ENCODE measurements at regions of chr3 and their contacts with region 1.

Region 1: GRCh38 chr3:14967285-14967684 is 19.9 kb downstream of the NR2C2 start:
- DNase-seq: no peak
- CTCF ChIP-seq: no peak

Region 2: GRCh38 chr3:14980689-14981088 is 13.4 kb after region 1 on chr3:
- CTCF ChIA-PET with region 1: interaction called, 18 read pairs
- POLR2A ChIA-PET with region 1: no interaction called
- DNase-seq: peak; percentile 35
- CTCF ChIP-seq: no peak

Region 3: DNA sequence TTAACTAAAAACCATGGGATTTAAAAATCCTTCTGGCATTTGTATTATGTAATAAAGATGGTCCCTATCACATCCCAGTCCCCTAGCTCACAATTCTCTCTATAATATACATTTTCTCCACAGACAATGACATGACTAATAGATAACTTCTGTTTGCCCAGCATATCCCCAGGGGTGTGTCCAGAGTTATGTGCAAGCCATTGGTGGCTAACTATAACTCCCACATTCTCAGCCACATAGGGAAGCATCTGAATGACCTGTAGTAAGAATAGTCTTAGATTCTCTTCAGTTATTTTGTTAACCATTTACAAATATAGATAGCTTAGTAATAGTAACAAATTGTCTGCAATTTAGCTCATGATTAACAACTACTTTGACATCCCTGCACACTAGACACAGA is 183.9 kb after region 1 on chr3:
- CTCF ChIA-PET with region 1: no interaction called
- POLR2A ChIA-PET with region 1: no interaction called
- DNase-seq: no peak
- CTCF ChIP-seq: no peak

Measured in GM10248 (cell line).